WTC11 (cell line): ENCODE measurements at regions of chr1 and their contacts with region 1.

Region 1: DNA sequence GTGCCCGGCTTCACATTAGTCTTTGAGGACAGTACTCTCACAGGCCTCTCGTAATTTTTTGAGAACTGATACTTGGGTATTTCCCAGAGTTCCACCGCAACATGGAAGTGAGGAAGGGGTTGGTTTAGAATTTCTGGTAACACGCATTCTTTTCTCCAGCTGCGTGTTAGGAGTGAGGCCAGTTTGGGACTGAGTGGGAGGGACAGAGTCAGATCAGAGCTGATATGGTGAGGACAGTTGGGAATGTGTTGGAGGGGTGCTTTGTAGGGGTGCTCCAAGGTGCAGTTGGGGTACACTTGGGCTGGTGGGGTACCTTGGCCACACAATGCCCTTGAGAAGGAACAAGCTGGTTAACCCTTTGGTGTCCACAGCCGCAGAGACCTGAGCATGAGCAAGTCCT is 6.7 kb downstream of the FBXO6 start:
- DNase-seq: no peak
- ATAC-seq: no peak
- H3K4me3 Mint-ChIP-seq: no peak overlapping the region
- H3K27ac Mint-ChIP-seq: no peak overlapping the region
- H3K4me1 Mint-ChIP-seq: no peaks in the 10 kb centered on the region
- H3K27me3 Mint-ChIP-seq: no peaks in the 10 kb centered on the region; the same call in 1 of the 2 replicates
- CTCF ChIP-seq: no peak

Region 2: DNA sequence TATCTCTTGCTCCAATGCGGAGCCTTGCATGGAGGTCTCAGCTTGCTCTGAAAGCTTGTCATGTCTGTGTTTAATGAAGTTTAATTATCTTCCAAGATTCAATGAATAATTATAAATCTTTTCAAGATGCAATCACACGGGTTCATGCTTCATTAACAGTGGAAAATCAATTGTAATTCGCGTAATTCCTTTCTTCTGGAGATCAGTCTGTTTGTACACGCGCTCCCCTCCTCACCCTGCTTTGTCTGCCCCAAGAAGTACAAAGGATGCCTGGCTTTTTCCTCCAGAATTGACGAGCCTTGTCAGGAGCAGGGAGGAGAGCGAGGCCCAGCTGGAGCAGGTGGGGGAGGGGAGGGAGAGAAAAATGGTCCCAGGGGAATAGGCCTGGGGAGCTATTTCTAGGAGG is 256.8 kb before region 1 on chr1:
- CTCF ChIA-PET with region 1: no interaction called
- POLR2A ChIA-PET with region 1: no interaction called
- DNase-seq: peak; percentile 28
- ATAC-seq: peak; percentile 38
- H3K4me3 Mint-ChIP-seq: no peak overlapping the region
- H3K27ac Mint-ChIP-seq: no peak overlapping the region; the same call in 1 of the 2 replicates
- H3K4me1 Mint-ChIP-seq: peaks cover 33% of the 10 kb centered on the region
- H3K27me3 Mint-ChIP-seq: peaks cover 5% of the 10 kb centered on the region
- CTCF ChIP-seq: no peak

Region 3: DNA sequence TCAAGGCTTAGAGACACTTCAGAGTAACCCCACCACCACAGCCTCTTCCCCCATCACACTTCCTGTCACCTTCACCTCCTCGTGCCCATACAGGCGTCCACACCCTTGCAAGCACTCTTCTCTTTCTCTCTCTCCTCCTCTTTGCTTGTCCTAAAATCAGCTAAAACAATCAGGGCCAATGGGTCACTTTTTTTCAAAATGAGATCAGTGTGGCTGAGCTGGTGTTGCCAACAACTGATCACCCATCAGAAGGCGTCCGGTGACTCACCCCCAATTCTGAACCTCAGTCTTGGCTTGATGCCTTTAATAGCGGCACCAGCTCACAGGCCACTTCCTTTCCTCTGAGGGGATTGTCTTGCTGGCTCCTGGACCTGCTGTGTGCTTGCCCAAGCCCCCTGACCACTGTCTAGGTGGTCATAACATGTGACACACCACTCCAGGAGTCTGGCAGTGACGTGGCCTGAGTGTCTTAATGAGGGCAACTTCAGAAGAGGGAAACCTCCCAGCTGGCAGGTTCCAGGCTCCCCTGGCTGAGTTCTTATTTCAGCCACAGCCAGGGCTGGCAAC is 22.4 kb after region 1 on chr1:
- CTCF ChIA-PET with region 1: interaction called, 6 read pairs
- POLR2A ChIA-PET with region 1: interaction called, 27 read pairs
- DNase-seq: no peak
- ATAC-seq: no peak
- H3K4me3 Mint-ChIP-seq: peak overlapping the region; percentile 89
- H3K27ac Mint-ChIP-seq: 0 out of 2 replicates have a peak overlapping the region, but pooled peaks have one; percentile 0
- H3K4me1 Mint-ChIP-seq: peaks cover 55% of the 10 kb centered on the region
- H3K27me3 Mint-ChIP-seq: no peaks in the 10 kb centered on the region
- CTCF ChIP-seq: no peak